BJ (cell line): ENCODE measurements at regions of chr6 and their contacts with region 1.

Region 1: DNA sequence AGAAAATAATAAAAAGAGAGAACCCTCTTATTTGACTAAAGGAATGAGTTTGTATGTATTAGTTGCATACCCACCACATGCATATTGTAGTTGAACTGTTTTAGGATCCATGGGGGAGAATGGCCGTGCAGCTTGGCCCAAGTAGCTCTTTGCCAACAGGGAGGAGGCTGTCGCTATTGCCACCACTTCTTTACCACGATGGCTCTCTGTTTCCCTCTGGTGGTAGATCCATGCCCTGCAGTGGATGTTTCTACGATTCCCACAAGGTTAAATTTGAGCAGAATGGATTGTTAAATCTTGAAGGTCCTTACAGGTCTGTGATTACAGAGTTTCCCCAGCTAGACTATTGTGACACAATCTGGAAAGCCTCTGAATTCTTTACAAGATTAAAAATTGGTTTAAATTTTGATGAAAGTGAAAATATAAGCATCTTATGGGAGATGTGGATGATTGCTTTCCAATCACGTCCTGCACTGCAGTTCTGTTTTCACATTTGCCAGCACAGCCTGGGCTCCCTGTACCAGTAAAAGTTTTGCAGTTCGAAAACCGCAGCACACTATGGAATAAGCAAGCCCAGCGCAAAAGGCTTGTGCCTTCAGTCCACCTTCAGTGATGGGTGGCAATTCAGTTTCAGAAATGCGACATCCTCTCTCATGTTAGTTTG is 34.4 kb upstream of the FNDC1 start:
- DNase-seq: no peak
- H3K4me3 ChIP-seq: no peak overlapping the region
- H3K27me3 ChIP-seq: peaks cover 1% of the 10 kb centered on the region; the same call in 1 of the 2 replicates
- CTCF ChIP-seq: peak; percentile 97

Region 2: DNA sequence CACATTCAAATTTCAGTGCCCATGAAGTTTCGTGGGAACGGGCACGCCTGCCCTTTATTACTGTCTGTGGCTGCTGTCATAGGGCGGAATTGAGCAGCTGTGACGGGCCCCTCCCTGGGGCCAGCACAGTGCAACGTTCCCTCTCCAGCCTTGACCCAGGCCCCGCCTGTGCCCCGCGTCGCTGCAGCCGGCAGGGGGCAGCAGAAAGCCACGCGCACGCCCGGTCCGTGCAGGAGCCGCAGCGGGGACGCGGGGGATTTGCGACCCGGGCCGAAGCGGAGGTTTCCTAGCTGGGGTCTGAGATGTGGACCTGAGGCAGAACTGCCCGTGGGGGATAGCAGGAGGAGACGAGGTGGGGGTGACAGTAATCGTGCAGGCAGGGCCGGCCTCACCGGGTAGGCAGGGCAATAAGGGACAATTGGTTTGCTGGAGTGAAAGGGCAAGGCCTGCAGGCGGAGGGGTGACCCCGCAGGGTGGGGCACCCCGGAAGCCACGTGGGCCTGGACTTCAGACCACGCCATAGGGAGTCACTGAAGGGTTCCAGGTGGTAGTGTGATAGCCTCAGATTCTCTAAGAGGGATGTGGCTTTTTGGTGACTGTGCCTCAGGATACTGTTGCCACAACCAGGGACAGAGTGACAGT is 430.5 kb before region 1 on chr6:
- CTCF ChIA-PET with region 1: interaction called, 14 read pairs
- POLR2A ChIA-PET with region 1: no interaction called
- DNase-seq: no peak
- H3K4me3 ChIP-seq: peak overlapping the region; percentile 47
- H3K27me3 ChIP-seq: no peaks in the 10 kb centered on the region
- CTCF ChIP-seq: peak; percentile 92

Region 3: GRCh38 chr6:159008656-159009288 is 126.1 kb before region 1 on chr6:
- CTCF ChIA-PET with region 1: interaction called, 111 read pairs
- POLR2A ChIA-PET with region 1: no interaction called
- DNase-seq: no peak
- H3K4me3 ChIP-seq: no peak overlapping the region
- H3K27me3 ChIP-seq: no peaks in the 10 kb centered on the region
- CTCF ChIP-seq: peak; percentile 47

Region 4: GRCh38 chr6:159017757-159018559 is 116.9 kb before region 1 on chr6:
- CTCF ChIA-PET with region 1: interaction called, 111 read pairs
- POLR2A ChIA-PET with region 1: no interaction called
- DNase-seq: no peak
- H3K4me3 ChIP-seq: no peak overlapping the region
- H3K27me3 ChIP-seq: 0 out of 2 replicates have a peak, but pooled peaks cover 2% of the 10 kb centered on the region
- CTCF ChIP-seq: no peak

Region 5: DNA sequence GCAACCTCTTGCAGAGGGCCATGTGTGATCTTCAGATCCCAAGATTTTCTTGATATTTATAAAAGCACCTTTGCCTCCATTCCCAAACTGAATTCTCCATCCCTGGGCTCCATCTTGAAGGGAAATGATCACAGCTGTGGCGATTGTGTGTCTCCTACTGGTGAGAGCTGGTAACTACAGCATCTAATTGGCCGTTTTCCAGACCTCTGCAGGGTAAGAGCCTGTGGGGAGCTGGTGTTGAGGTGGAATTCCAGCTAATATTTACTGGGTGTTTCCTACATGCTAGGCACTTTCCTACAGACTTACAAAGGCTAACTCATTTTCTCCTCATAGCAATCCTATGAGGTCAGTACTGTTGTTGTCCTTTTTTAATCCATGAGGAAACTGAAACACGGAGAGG is 24.8 kb before region 1 on chr6:
- CTCF ChIA-PET with region 1: interaction called, 15 read pairs
- POLR2A ChIA-PET with region 1: no interaction called
- DNase-seq: peak; percentile 25
- H3K4me3 ChIP-seq: no peak overlapping the region
- H3K27me3 ChIP-seq: no peaks in the 10 kb centered on the region; the same call in 1 of the 2 replicates
- CTCF ChIP-seq: peak; percentile 76

Region 6: DNA sequence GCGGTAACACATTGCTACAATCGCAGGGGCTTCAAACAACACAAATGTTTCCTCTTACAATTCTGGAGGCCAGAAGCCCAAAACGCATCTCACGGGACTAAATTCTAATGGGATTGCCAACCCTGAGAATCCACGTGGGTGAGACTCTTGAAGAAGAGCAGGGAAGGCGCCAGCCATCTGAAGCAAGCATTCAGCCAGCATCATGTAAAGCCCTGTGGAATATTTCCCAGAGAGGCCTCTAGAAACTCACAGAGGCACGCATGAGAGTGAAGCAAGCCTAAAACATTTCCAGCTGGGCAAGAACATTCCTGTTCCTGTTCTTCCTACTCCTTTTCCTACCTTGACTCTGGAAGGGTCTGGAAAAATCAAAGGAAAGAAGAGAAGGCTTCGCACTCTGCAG is 14.8 kb after region 1 on chr6:
- CTCF ChIA-PET with region 1: interaction called, 37 read pairs
- POLR2A ChIA-PET with region 1: no interaction called
- DNase-seq: no peak
- H3K4me3 ChIP-seq: no peak overlapping the region
- H3K27me3 ChIP-seq: no peaks in the 10 kb centered on the region
- CTCF ChIP-seq: no peak

Region 7: DNA sequence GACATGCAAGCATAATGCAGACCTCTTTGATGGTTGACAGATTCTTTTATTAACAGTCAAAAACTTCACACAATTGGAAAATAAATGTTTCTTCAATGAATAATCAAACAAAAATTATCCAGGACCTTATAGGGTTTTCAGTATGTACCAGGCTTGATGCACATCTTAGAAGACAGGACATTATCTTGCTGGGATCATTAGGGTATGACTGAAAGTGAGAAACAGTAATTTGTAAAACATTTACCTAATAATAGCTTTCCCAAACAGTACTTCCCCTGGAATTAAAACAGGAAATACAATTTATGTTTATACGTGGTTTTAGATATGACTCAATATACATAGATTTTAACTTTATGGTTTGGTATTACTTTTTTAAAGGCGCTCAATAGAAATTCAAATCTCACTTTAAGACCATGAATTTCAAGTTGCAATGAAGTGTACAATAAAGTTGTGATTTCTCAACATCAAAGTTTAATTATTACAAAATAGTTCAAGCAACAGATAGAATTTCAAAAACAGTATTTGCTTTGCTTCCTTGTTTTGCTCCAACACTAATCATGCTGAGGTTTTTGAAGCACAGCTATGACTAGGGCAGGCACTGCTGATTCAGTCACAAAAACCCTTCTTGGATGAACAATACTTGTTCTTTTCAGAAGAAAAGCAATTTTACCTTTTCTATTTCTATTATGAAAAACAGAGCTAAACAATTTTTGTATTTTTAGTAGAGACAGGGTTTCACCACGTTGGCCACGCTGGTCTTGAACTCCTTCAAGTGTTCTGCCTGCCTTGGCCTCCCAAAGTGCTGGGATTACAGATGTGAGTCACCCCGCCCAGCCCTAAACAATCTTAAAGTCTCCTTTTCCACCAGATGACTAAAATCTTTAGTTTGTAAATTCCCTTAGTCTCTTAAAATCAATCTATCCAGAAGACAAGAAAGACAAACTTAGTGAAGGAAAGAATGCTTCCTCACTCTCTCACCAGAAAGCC is 544.6 kb after region 1 on chr6:
- CTCF ChIA-PET with region 1: no interaction called
- POLR2A ChIA-PET with region 1: no interaction called
- DNase-seq: no peak
- H3K4me3 ChIP-seq: no peak overlapping the region
- H3K27me3 ChIP-seq: no peaks in the 10 kb centered on the region
- CTCF ChIP-seq: no peak